WTC11 (cell line): ENCODE measurements at regions of chr1 and their contacts with region 1.

Region 1: DNA sequence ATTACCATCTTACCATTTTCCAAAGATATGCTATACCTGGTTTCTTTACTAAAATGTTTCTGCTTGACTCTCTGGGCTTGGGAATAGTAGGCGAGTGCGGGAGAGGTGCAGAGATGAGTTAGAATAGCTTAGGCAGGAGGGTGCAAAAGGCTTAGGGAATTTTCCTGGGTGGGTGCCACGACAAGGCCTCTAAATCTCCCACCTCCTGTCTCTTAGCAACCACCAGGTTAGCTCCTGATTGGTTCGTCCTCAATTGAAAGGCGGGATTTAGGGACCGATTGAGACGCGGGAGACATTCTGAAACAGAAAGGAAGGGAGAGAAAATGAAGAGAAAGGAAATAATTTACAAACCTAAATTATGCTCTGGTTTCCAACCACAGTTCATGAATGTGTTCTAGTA is 3.1 kb downstream of the ACKR1 start:
- DNase-seq: no peak
- ATAC-seq: peak; percentile 12; the same call in 1 of the 2 replicates
- H3K4me3 Mint-ChIP-seq: peak overlapping the region; percentile 63
- H3K27ac Mint-ChIP-seq: no peak overlapping the region
- H3K4me1 Mint-ChIP-seq: peaks cover 44% of the 10 kb centered on the region
- H3K27me3 Mint-ChIP-seq: peaks cover 6% of the 10 kb centered on the region
- CTCF ChIP-seq: no peak

Region 2: GRCh38 chr1:159132271-159132881 is 75.4 kb before region 1 on chr1:
- CTCF ChIA-PET with region 1: interaction called, 181 read pairs
- POLR2A ChIA-PET with region 1: interaction called, 4 read pairs
- DNase-seq: peak; percentile 68
- ATAC-seq: peak; percentile 43; the same call in 1 of the 2 replicates
- H3K4me3 Mint-ChIP-seq: no peak overlapping the region
- H3K27ac Mint-ChIP-seq: no peak overlapping the region
- H3K4me1 Mint-ChIP-seq: no peaks in the 10 kb centered on the region
- H3K27me3 Mint-ChIP-seq: no peaks in the 10 kb centered on the region
- CTCF ChIP-seq: peak; percentile 67

Region 3: GRCh38 chr1:159171688-159172501 is 35.9 kb before region 1 on chr1:
- CTCF ChIA-PET with region 1: interaction called, 17 read pairs
- POLR2A ChIA-PET with region 1: interaction called, 9 read pairs
- DNase-seq: peak; percentile 68
- ATAC-seq: peak; percentile 30
- H3K4me3 Mint-ChIP-seq: peak overlapping the region; percentile 89
- H3K27ac Mint-ChIP-seq: no peak overlapping the region
- H3K4me1 Mint-ChIP-seq: peaks cover 17% of the 10 kb centered on the region
- H3K27me3 Mint-ChIP-seq: peaks cover 23% of the 10 kb centered on the region
- CTCF ChIP-seq: no peak

Region 4: DNA sequence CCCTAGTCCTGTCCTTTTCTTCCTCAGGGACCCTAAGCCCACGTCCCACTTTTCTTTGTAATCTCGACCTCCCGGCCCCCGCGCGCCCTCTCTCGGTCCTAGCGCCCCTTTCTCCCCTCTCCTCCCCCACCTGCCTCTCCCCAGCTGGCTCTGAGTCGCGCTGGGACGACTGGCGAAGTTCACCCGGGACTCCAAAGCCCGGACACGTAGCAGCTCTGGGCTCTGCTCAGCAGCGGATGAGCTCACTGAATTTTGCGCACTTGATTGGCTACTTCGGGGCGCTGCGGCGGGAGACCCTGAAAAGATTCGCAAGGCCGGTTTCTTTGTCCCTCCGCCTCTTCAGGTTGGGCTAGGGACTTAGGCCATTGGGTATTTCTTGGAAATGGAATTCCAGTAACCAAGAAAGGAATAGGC is 19.4 kb before region 1 on chr1:
- CTCF ChIA-PET with region 1: interaction called, 200 read pairs
- POLR2A ChIA-PET with region 1: interaction called, 4 read pairs
- DNase-seq: peak; percentile 89
- ATAC-seq: peak; percentile 97
- H3K4me3 Mint-ChIP-seq: peak overlapping the region; percentile 83
- H3K27ac Mint-ChIP-seq: peak overlapping the region; percentile 85
- H3K4me1 Mint-ChIP-seq: peaks cover 43% of the 10 kb centered on the region
- H3K27me3 Mint-ChIP-seq: peaks cover 3% of the 10 kb centered on the region
- CTCF ChIP-seq: no peak